ENCODE measurements at regions of chr19 and their contacts with region 1.

Region 1: GRCh38 chr19:49301165-49301865 is 23.7 kb downstream of the SLC6A16 start:
- H3K4me3 ChIP-seq: peak overlapping the region; percentile 41
- H3K27ac ChIP-seq: no peak overlapping the region
- H3K4me1 ChIP-seq: no peaks in the 10 kb centered on the region
- CTCF ChIP-seq: peak; percentile 90

Region 2: DNA sequence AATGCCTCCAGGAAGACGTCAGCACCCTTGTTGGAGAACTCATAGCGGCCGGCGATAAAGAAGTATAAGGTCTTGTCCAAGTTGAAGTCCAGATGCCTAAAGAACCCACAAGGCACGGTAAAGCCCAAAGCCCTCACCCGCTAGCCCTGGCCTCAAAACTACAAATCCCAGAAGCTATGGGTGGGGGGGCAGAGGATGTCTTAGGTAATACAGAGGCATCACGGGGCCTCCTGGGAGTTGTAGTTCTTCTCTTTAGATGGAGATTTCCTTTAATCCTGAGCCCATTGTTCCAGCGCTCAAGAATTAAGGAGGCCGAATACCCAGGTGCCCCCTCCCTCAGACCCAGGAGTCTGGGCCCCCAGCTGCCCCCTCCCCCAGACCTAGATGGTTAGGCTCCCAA is 319.0 kb before region 1 on chr19:
- CTCF ChIA-PET with region 1: no interaction called
- POLR2A ChIA-PET with region 1: no interaction called
- H3K4me3 ChIP-seq: no peak overlapping the region
- H3K27ac ChIP-seq: no peak overlapping the region
- H3K4me1 ChIP-seq: no peaks in the 10 kb centered on the region
- CTCF ChIP-seq: no peak

Region 3: DNA sequence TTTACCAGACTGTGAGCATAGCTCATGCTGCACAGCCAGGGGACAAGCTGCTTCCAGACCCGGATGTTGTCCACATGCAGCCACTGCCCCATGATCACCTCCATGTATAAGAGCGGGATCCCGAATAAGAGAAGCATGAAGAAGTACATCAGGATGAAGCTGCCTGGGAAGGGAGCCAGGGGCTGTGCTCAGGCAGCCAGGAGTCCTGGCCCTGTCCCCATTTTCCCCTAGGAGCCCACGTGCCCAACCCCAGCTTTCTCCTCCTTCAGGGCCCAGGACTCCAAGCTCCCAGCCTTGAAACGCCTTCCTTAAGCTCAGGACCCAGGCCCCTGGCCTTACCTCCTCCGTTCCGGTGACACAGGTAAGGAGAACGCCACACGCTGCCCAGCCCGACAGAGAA is 45.6 kb before region 1 on chr19:
- CTCF ChIA-PET with region 1: interaction called, 19 read pairs
- POLR2A ChIA-PET with region 1: no interaction called
- H3K4me3 ChIP-seq: no peak overlapping the region
- H3K27ac ChIP-seq: no peak overlapping the region
- H3K4me1 ChIP-seq: no peaks in the 10 kb centered on the region
- CTCF ChIP-seq: no peak

Region 4: DNA sequence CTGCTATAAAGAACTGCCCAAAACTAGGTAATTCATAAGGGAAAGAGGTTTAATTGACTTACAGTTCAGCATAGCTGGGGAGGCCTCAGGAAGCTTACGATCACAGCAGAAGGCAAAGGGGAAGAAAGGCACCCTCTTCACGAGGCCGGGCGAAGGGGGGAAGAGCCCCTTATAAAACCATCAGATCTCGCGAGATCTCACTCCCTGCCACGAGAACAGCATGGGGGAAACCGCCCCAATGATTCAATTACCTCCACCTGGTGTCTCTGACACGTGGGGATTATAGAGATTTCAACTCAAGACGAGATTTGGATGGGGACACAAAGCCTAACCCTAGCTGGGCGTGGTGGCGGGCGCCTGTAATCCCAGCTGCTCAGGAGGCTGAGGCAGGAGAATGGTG is 19.1 kb before region 1 on chr19:
- CTCF ChIA-PET with region 1: interaction called, 42 read pairs
- POLR2A ChIA-PET with region 1: no interaction called
- H3K4me3 ChIP-seq: no peak overlapping the region
- H3K27ac ChIP-seq: no peak overlapping the region
- H3K4me1 ChIP-seq: no peaks in the 10 kb centered on the region
- CTCF ChIP-seq: no peak

Region 5: GRCh38 chr19:49315111-49315510 is 13.8 kb after region 1 on chr19:
- CTCF ChIA-PET with region 1: interaction called, 35 read pairs
- POLR2A ChIA-PET with region 1: no interaction called
- H3K4me3 ChIP-seq: no peak overlapping the region
- H3K27ac ChIP-seq: no peak overlapping the region
- H3K4me1 ChIP-seq: peaks cover 9% of the 10 kb centered on the region
- CTCF ChIP-seq: no peak

Region 6: GRCh38 chr19:49331616-49332055 is 30.3 kb after region 1 on chr19:
- CTCF ChIA-PET with region 1: interaction called, 36 read pairs
- POLR2A ChIA-PET with region 1: no interaction called
- H3K4me3 ChIP-seq: no peak overlapping the region
- H3K27ac ChIP-seq: no peak overlapping the region
- H3K4me1 ChIP-seq: no peaks in the 10 kb centered on the region
- CTCF ChIP-seq: no peak

Measured in HEK293 (cell line).